Heart left ventricle (tissue), 16 donors: ENCODE measurements at regions of chr2 and their contacts with region 1.

Region 1: DNA sequence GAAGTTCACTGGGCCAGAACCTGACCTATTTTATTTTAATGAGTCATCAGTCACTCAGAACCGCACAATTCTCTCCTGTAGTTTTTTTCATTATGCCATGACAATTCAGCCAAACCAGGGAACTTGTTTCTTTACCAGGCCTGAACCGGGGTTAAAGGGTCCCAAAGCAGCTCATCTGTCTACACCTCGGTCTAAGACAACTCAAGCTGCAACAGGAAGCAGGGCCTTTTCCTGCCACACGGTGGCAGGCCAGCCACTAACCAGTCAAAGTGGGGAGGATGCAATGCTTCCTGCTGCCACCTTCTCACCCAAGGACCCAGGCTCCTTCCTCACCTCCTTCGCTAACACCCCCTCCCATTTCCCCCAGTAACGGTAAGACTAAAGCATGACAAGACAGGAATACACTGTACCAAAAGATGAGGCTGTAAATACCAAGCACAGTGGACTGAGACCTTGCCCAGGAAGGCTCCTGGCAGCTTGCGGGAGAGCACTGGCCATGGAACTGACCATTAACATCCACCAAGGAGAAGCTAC is 56.7 kb upstream of the ACKR3 start:
- DNase-seq: peak; percentile 50 to 74 (median 67)
- ATAC-seq: peak; percentile 45 to 94 (median 85)
- H3K4me3 ChIP-seq: no peak overlapping the region
- H3K27ac ChIP-seq: no peak overlapping the region
- H3K4me1 ChIP-seq: peaks cover 0 to 12% (median 2%) of the 10 kb centered on the region in 12 donors
- H3K27me3 ChIP-seq: peaks cover 0 to 6% (median 0%) of the 10 kb centered on the region in 9 donors
- CTCF ChIP-seq: peak; percentile 77 to 92 (median 84)
- POLR2A ChIP-seq: no peak

Region 2: GRCh38 chr2:236343400-236344161 is 169.4 kb before region 1 on chr2:
- intact Hi-C with region 1: loop called in 1 of 10 experiments (anchors 10 kb)
- DNase-seq: peak in 3 of 5 donors; percentile 45 to 57 (median 53)
- ATAC-seq: no peak
- H3K4me3 ChIP-seq: no peak overlapping the region
- H3K27ac ChIP-seq: no peak overlapping the region
- H3K4me1 ChIP-seq: peaks cover 0 to 45% (median 9%) of the 10 kb centered on the region in 12 donors
- H3K27me3 ChIP-seq: no peaks in the 10 kb centered on the region
- CTCF ChIP-seq: peak; percentile 67 to 86 (median 81)
- POLR2A ChIP-seq: no peak

Region 3: DNA sequence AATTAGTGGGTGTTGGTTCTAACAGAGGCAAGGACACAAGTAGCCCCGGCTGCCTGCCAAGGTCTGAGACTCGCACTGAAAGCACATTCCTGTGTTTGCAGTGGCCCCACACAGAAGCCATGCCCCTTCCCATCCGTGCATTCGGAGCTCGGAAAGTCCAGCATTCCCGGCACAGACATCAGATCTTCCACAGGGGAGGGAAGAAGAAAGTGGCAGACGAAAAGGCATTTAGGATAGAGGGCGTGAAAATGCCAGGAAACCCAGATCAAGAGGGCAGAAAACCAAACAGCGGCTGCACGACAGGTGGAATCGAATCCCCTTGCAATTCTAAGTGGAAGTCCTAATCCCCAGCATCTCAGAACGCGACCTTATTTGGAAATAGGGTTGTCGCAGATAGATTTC is 143.3 kb before region 1 on chr2:
- intact Hi-C with region 1: loop called in 1 of 10 experiments (anchors 10 kb)
- DNase-seq: peak in 1 of 5 donors; percentile 68
- ATAC-seq: no peak
- H3K4me3 ChIP-seq: no peak overlapping the region
- H3K27ac ChIP-seq: no peak overlapping the region
- H3K4me1 ChIP-seq: peaks cover 0 to 8% (median 0%) of the 10 kb centered on the region in 12 donors
- H3K27me3 ChIP-seq: peaks cover 0 to 18% (median 5%) of the 10 kb centered on the region in 9 donors
- CTCF ChIP-seq: no peak
- POLR2A ChIP-seq: no peak

Region 4: DNA sequence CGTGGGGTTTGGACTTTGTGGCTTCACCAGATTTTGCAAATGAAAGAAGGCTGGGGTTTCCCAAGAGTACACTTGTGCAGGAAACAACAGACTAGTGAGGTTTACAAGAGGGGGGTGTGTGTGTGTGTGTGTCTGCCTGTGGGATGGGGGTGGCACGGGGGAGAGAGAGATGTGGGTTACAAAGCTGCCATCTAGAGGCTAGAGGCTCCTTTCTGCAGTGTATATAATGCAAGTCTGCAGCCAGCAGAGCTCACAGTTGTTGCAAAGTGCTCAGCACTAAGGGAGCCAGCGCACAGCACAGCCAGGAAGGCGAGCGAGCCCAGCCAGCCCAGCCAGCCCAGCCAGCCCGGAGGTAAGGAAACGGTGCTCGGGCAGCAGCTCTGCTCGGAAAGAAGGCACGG is 56.6 kb after region 1 on chr2 and contains the start of gene ACKR3:
- intact Hi-C with region 1: loop called (anchors 1 to 5 kb)
- DNase-seq: peak; percentile 84 to 87 (median 84)
- ATAC-seq: peak; percentile 74 to 86 (median 84)
- H3K4me3 ChIP-seq: peak within 1 kb of the TSS; percentile 17 to 80 (median 59)
- H3K27ac ChIP-seq: peak within 1 kb of the TSS; percentile 85 to 98 (median 96)
- H3K4me1 ChIP-seq: peaks cover 6 to 68% (median 48%) of the 10 kb centered on the region in 12 donors
- H3K27me3 ChIP-seq: no peaks in the 10 kb centered on the region
- CTCF ChIP-seq: peak in 11 of 12 donors; percentile 13 to 64 (median 43)
- POLR2A ChIP-seq: peak; percentile 68 to 88
- total RNA-seq, gene ACKR3: 15.7 to 56.3 (median 49.4) TPM

Region 5: DNA sequence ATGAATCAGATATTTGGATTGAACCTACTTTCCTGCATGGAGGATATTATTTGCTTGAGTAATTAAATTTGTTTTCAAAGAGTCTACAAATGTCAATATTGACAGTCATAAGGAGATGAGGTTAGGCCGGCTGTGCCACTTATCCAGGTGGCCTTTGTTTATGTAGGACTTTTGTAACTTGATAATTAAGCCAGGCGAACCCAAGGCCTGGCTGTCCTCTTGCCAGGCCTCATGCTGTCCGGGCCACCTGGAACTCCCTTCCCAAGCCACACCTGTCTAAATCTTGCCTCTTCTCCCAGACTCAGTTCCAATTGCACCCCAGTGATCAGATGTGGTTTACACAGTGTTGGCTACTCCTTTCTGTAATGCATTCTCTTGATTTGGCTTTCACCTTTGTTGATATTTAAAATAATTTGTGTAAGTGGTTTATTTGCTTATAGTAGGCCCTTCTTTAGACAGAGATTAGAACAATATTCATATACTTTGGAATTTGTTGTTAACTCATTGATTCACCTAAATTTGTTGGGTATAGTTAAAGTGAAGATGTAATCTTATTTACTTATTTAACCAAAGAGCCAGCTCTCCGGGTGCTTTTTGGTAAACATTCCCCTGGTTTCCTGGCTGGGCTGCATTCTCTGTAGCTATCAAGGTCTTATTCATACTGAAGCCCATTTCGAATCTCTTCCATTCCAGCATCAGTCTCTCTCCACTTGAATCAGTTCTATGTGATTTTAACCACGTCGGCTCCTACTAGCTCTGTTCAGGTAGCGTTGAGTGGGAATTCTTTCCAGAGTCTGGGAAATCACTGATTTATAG is 312.1 kb after region 1 on chr2:
- intact Hi-C with region 1: loop called in 1 of 10 experiments (anchors 5 kb)
- DNase-seq: no peak
- ATAC-seq: no peak
- H3K4me3 ChIP-seq: no peak overlapping the region
- H3K27ac ChIP-seq: no peak overlapping the region
- H3K4me1 ChIP-seq: peaks cover 0 to 21% (median 6%) of the 10 kb centered on the region in 12 donors
- H3K27me3 ChIP-seq: no peaks in the 10 kb centered on the region
- CTCF ChIP-seq: no peak
- POLR2A ChIP-seq: no peak

Region 6: DNA sequence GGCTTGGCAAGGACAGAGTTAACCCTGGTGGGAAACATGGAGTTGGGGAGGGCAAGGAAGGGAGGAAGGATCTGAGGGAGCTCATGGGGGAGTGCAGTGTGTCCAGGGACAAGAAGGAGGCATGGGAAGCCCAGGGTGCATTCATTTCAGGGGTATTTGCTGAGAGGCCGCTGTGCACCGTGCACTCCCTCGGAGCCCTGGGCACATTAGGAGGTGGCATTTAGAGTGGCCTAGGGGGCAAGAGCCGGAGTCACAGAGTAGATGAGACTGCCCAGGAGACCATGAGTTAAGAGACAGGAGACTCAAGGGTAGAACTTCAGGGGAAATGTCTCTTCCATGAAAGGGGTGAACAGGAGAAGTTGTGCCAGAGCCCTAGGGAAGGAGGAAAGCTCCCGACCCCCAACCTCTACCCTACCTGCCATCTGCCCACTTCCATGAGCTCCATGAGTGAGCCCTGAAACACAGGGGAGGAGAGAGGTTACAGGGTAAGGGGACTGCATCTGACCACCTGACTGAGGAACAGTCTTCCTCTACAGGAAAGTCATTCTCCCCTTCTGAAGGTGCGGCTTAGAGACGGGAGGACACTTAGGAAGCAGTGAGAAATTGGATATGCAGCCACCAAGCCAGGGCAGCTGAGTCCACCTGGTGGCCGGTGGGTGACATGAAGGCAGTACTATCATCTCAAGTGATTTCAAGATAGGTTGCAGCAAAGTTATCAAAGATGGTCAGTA is 514.2 kb after region 1 on chr2:
- intact Hi-C with region 1: loop called (anchors 1 to 5 kb)
- DNase-seq: peak; percentile 62 to 82 (median 65)
- ATAC-seq: peak; percentile 87 to 92 (median 92)
- H3K4me3 ChIP-seq: no peak overlapping the region
- H3K27ac ChIP-seq: no peak overlapping the region
- H3K4me1 ChIP-seq: peaks cover 0 to 9% (median 0%) of the 10 kb centered on the region in 12 donors
- H3K27me3 ChIP-seq: no peaks in the 10 kb centered on the region
- CTCF ChIP-seq: peak; percentile 62 to 94 (median 86)
- POLR2A ChIP-seq: no peak